GM12878 (cell line): ENCODE measurements at regions of chr4 and their contacts with region 1.

Region 1: DNA sequence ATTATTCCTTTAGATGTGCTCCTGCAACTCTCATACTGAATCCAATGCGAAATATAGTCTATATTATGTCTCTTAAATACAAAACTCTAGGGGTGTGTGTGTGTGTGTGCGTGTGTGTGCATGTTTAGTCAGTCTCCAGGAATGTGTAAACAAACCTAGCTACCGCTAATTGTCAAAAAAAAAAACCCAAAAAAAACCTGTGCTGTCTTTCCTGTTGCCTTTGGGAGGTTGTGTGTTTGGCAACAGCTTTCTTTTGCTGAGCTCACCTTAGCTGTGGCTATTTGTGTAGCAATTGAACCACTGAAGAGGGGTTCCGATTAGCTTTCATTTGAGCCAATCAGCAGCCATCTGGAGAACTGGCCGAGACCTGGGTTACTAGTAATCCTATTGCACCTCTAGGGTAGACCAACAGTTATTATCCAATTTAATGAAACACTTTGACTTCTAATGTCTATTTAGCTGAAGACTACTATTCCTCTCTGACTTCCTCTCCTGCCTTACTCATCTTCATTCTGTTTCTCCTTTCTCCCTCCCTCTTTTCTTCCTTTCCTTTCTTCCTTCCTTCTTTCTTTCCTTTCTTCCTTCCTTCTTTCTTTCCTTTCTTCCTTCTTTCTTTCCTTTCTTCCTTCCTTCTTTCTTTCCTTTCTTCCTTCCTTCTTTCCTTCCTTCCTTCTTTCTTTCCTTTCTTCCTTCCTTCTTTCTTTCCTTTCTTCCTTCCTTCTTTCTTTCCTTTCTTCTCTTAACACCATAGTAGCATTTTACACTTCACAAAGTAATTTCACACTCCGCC is 471.1 kb downstream of the GBA3 start:
- DNase-seq: no peak
- ATAC-seq: no peak
- H3K4me3 ChIP-seq: no peak overlapping the region
- H3K27ac ChIP-seq: no peak overlapping the region
- H3K4me1 ChIP-seq: no peaks in the 10 kb centered on the region
- H3K27me3 ChIP-seq: no peaks in the 10 kb centered on the region
- CTCF ChIP-seq: no peak
- EP300 ChIP-seq: no peak
- POLR2A ChIP-seq: no peak
- RAD21 ChIP-seq: no peak

Region 2: DNA sequence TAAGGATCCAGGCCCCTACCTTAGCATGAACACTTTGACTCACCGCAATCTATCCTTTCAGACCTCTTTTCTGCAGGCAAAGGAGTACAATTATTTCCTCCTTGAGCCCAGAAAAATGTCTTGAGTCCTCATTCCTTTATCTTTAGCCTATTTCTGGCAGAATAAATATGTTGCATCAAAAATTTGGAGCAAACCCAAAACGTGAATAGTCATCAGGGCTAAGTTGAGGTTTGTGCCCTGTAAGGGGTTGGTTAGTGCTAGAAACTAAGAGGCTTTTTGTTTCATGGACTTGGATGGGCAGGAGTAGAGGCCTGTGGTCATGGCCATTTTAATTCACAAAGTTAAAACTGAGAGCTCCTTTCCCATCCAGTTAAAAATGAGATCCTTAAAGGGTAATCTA is 10.8 kb before region 1 on chr4:
- CTCF ChIA-PET with region 1: interaction called, 4 read pairs
- POLR2A ChIA-PET with region 1: interaction called, 3 read pairs
- RAD21 ChIA-PET with region 1: interaction called, 3 read pairs
- SMC1A ChIA-PET with region 1: interaction called, 14 read pairs
- in situ Hi-C with region 1: no loop called
- intact Hi-C with region 1: no loop called
- DNase-seq: no peak
- ATAC-seq: no peak
- H3K4me3 ChIP-seq: no peak overlapping the region
- H3K27ac ChIP-seq: no peak overlapping the region
- H3K4me1 ChIP-seq: no peaks in the 10 kb centered on the region
- H3K27me3 ChIP-seq: no peaks in the 10 kb centered on the region
- CTCF ChIP-seq: no peak
- EP300 ChIP-seq: no peak
- POLR2A ChIP-seq: no peak
- RAD21 ChIP-seq: no peak